ENCODE measurements at regions of chr19 and their contacts with region 1.

Region 1: DNA sequence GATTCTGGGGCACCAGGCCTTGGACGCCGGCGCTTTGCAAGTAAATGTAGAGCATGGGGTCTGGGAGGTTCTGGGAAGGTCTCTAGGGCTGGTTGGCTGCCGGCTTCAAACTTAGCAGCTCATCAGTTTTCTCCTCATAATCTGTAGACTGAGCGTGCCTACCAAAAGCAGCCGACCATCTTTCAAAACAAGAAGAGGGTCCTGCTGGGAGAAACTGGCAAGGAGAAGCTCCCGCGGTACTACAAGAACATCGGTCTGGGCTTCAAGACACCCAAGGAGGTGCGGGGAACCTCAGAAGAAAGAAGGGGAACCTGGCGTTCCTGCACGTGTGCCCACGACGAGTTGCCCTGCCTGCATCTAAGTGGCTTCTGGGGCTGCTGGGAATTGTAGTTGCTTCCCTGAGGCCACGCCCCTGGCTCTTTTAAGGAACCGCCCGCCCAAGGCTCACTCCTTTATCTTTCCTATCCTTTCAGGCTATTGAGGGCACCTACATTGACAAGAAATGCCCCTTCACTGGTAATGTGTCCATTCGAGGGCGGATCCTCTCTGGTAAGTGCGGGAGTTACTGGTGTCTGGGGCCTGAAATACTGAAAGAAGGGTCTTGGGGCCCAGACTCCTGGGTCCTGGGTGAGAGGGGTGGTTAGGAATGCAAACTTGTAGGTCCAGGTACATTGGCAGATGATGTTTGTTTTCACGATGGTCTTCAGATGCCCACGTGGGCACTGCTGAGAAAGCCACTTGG is 984 bp downstream of the RPS11 start:
- DNase-seq: peak; percentile 73
- H3K4me3 Mint-ChIP-seq: peak overlapping the region; percentile 98
- H3K27ac Mint-ChIP-seq: peak overlapping the region; percentile 94
- H3K4me1 Mint-ChIP-seq: peaks cover 44% of the 10 kb centered on the region
- H3K27me3 Mint-ChIP-seq: no peaks in the 10 kb centered on the region

Region 2: GRCh38 chr19:49422407-49423070 is 74.7 kb before region 1 on chr19:
- intact Hi-C with region 1: no loop called
- DNase-seq: peak; percentile 68
- H3K4me3 Mint-ChIP-seq: peak overlapping the region; percentile 72
- H3K27ac Mint-ChIP-seq: no peak overlapping the region
- H3K4me1 Mint-ChIP-seq: peaks cover 33% of the 10 kb centered on the region
- H3K27me3 Mint-ChIP-seq: peaks cover 86% of the 10 kb centered on the region

Region 3: GRCh38 chr19:49451430-49452181 is 45.6 kb before region 1 on chr19 and contains the start of gene PIH1D1:
- intact Hi-C with region 1: loop called (anchors 5 kb)
- DNase-seq: peak; percentile 95
- H3K4me3 Mint-ChIP-seq: peak within 1 kb of the TSS; percentile 99
- H3K27ac Mint-ChIP-seq: peak within 1 kb of the TSS; percentile 100
- H3K4me1 Mint-ChIP-seq: peaks cover 30% of the 10 kb centered on the region
- H3K27me3 Mint-ChIP-seq: no peaks in the 10 kb centered on the region
- total RNA-seq, gene PIH1D1: 136 and 138 TPM in 2 replicates